ENCODE measurements at regions of chr3 and their contacts with region 1.

Region 1: DNA sequence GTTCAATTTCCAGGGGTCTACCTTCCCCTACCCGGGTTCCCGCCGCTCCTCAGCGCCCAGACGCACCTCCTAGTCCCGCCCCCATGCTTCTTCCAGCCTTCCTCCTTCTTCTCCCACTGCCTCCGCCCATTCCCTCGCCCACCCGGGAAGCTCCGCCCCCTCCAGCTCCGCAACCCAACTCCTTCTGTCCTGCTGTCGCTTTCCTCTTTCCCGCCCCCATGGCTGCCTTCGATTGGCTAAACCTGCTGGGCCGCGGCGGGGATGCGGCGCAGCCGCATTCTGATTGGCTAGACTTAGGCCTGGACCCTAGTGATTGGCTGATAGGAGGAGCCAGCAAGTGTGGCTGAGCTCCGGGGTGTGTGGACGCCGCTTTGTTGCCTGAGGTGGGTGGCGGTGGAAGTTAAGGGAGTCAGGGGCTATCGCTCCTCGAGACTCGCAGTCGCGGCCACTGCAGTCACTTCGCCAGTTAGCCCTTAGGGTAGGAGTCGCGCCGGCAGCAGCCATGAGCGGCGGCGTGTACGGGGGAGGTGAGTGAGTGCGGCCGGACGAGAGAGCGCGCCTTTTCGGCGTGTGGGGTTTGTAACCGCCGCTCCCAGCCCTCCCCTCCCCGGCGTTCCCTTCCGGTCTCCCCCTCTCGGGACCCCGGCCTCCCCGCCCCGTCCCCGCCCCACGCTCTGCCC is at the start of gene ACTL6A:
- DNase-seq: peak; percentile 100
- H3K4me3 ChIP-seq: peak within 1 kb of the TSS; percentile 55 to 75 (median 70)
- H3K27ac ChIP-seq: peak within 1 kb of the TSS; percentile 25
- H3K4me1 ChIP-seq: peaks cover 7% of the 10 kb centered on the region
- H3K27me3 ChIP-seq: no peaks in the 10 kb centered on the region
- CTCF ChIP-seq: no peak
- POLR2A ChIP-seq: peak; percentile 73
- total RNA-seq, gene ACTL6A: 63.1 and 68.3 TPM in 2 replicates

Region 2: DNA sequence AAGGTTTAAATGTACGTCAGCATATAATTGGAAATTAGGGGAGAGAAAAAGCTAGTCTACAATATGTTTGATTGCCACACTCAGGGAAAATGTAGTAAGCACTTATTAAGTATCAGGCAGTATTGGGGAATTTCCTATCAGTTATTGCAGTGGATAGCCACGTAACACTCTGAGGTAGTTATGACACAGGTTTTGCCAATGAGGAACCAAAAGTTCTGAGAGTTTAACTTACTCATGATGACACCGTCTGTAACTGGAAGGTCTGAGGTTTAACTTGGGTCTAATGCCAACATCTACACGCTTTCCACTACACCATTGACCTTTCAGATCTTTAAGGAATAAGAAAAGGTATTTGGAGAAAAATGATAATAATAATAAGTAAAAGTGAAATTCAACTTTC is 580.6 kb before region 1 on chr3:
- CTCF ChIA-PET with region 1: no interaction called
- POLR2A ChIA-PET with region 1: no interaction called
- dilution Hi-C with region 1: no loop called
- intact Hi-C with region 1: no loop called
- DNase-seq: no peak
- H3K4me3 ChIP-seq: no peak overlapping the region
- H3K27ac ChIP-seq: no peak overlapping the region
- H3K4me1 ChIP-seq: no peaks in the 10 kb centered on the region
- H3K27me3 ChIP-seq: no peaks in the 10 kb centered on the region
- CTCF ChIP-seq: no peak
- POLR2A ChIP-seq: no peak

Region 3: DNA sequence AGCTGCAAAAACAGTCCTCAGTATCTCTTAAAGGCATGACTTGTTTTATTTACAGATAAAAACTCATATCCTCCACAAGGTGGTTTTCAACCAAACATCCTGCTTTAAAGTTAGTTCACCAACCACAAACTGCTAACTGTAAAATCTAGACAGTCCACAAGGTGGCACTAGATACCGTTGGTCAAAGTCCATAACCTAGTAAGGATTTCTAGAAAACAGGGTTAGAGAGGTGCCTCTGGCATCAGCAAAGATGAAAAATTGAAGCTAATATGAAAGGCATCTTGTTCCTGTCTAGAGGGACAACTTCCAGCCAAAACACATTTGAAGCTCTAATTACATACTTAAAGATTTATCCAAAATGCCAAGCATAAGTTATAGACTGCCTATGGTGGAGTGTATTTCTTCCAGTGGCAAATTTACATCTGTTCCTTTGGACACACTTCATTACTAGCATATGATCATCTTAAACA is 547.1 kb before region 1 on chr3:
- CTCF ChIA-PET with region 1: no interaction called
- POLR2A ChIA-PET with region 1: no interaction called
- dilution Hi-C with region 1: no loop called
- intact Hi-C with region 1: loop called (anchors 2 kb)
- DNase-seq: peak; percentile 86
- H3K4me3 ChIP-seq: no peak overlapping the region
- H3K27ac ChIP-seq: no peak overlapping the region
- H3K4me1 ChIP-seq: peaks cover 6% of the 10 kb centered on the region
- H3K27me3 ChIP-seq: no peaks in the 10 kb centered on the region
- CTCF ChIP-seq: peak; percentile 59 to 62
- POLR2A ChIP-seq: no peak

Region 4: GRCh38 chr3:179322286-179323196 is 240.2 kb before region 1 on chr3 and contains the start of gene ZNF639:
- CTCF ChIA-PET with region 1: interaction called, 10 read pairs
- POLR2A ChIA-PET with region 1: no interaction called
- dilution Hi-C with region 1: no loop called
- intact Hi-C with region 1: loop called (anchors 1 kb)
- DNase-seq: peak; percentile 90
- H3K4me3 ChIP-seq: peak within 1 kb of the TSS; percentile 70 to 90 (median 87)
- H3K27ac ChIP-seq: peak within 1 kb of the TSS; percentile 74
- H3K4me1 ChIP-seq: peaks cover 19% of the 10 kb centered on the region
- H3K27me3 ChIP-seq: no peaks in the 10 kb centered on the region
- CTCF ChIP-seq: peak; percentile 83 to 88
- POLR2A ChIP-seq: peak; percentile 36
- total RNA-seq, gene ZNF639: 28.4 and 30.5 TPM in 2 replicates

Region 5: GRCh38 chr3:179421500-179421899 is 141.2 kb before region 1 on chr3:
- CTCF ChIA-PET with region 1: interaction called, 15 read pairs
- POLR2A ChIA-PET with region 1: no interaction called
- dilution Hi-C with region 1: no loop called
- intact Hi-C with region 1: loop called (anchors 1 kb)
- DNase-seq: peak; percentile 53
- H3K4me3 ChIP-seq: no peak overlapping the region
- H3K27ac ChIP-seq: no peak overlapping the region
- H3K4me1 ChIP-seq: no peaks in the 10 kb centered on the region
- H3K27me3 ChIP-seq: no peaks in the 10 kb centered on the region
- CTCF ChIP-seq: peak; percentile 27 to 36
- POLR2A ChIP-seq: no peak

Region 6: DNA sequence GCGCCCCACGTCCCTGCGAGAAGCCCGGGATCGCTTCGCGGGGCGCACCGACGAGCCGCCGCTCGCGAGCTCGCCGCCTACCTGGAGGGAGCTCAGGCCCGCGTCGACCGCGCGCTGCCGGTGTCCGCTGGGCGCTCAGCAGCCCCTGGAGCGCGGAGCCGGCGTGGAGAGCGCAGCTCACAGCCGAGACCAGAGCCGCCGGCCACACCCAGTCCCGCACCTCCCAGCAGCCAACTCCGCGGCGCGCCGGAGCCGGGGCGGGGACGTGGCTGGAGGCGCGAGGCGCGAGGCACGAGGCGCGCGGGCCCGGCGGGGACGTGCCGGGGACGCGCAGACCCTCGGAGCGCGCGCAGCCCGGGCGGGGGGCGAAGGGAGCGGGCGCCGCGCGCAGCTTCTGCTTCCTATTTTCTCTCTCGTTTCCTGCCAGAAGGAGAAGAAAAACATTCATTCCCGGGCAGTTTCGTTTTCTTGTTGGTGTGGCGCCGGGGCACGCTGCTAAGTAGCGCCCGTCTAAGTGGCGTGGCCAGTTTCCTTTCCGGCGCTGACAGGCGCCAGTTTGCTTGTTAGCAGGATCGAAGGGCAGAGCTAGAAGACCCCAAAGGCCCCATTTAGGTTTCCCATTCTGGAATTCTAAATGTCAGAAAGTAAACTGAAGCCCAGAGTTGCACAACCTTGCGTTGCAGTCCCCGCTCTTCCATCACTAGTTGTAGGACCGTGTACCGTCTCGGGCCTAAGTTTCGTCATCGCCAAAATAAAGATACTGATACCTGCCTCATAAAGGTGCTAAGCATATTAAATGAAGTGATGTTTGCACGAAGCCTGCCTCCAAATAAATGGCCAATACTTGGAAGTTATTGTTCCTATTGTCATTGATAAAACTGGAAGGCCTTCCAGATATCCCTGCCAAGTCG is 111.2 kb before region 1 on chr3 and contains the start of gene GNB4:
- CTCF ChIA-PET with region 1: interaction called, 57 read pairs
- POLR2A ChIA-PET with region 1: interaction called, 4 read pairs
- dilution Hi-C with region 1: no loop called
- intact Hi-C with region 1: loop called (anchors 1 kb)
- DNase-seq: peak; percentile 96
- H3K4me3 ChIP-seq: peak within 1 kb of the TSS; percentile 43 to 93 (median 92)
- H3K27ac ChIP-seq: peak within 1 kb of the TSS; percentile 95
- H3K4me1 ChIP-seq: peaks cover 29% of the 10 kb centered on the region
- H3K27me3 ChIP-seq: no peaks in the 10 kb centered on the region
- CTCF ChIP-seq: no peak
- POLR2A ChIP-seq: peak; percentile 87
- total RNA-seq, gene GNB4: 61.9 and 62.6 TPM in 2 replicates

Region 7: DNA sequence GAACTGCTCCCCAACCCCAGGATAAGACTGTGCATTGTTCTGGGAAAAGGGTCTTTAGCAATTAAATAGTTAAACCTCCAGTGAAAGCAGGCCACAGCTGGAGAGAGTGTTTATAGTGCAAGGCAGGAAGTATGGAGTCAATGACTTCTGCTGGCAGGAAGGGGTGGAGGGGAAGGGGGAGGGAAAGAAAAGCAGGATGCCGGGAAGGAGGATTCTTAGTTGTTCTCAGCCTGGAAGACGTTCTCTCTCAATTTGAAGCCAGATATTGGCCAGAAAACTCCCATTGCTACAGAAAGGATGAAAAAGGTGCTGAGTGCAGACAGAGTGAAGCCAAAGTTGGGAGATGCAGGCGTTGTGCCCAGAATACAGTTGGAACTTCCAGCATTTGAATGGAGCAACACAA is 35.7 kb before region 1 on chr3:
- CTCF ChIA-PET with region 1: no interaction called
- POLR2A ChIA-PET with region 1: no interaction called
- dilution Hi-C with region 1: no loop called
- intact Hi-C with region 1: loop called (anchors 1 kb)
- DNase-seq: peak; percentile 94
- H3K4me3 ChIP-seq: peak overlapping the region in 2 of 3 experiments; percentile 18 to 40
- H3K27ac ChIP-seq: peak overlapping the region; percentile 78
- H3K4me1 ChIP-seq: peaks cover 18% of the 10 kb centered on the region
- H3K27me3 ChIP-seq: no peaks in the 10 kb centered on the region
- CTCF ChIP-seq: no peak
- POLR2A ChIP-seq: peak; percentile 31

Region 8: DNA sequence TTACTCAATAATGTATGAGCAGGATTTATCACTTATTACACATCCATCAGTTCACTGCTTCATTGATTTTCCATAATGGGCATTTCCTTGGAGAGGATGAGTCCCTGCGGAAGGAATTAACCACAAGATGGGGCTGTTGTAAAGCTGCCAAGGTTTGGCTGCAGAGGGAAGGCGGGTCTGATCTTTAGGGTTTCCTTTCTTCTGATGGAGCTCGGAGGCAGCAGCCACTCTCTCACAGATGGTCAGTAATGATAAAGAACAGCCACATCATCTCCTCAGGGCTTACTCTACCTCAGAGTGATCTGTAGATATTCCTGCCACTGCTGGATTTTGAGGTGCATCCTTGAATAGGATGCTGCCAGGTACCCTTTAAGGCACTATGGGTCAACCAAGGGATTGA is 205.3 kb after region 1 on chr3:
- CTCF ChIA-PET with region 1: no interaction called
- POLR2A ChIA-PET with region 1: no interaction called
- dilution Hi-C with region 1: no loop called
- intact Hi-C with region 1: no loop called
- DNase-seq: peak; percentile 43
- H3K4me3 ChIP-seq: no peak overlapping the region
- H3K27ac ChIP-seq: no peak overlapping the region
- H3K4me1 ChIP-seq: peaks cover 16% of the 10 kb centered on the region
- H3K27me3 ChIP-seq: no peaks in the 10 kb centered on the region
- CTCF ChIP-seq: peak; percentile 37 to 38
- POLR2A ChIP-seq: no peak

Region 9: GRCh38 chr3:179872842-179873241 is 310.1 kb after region 1 on chr3:
- CTCF ChIA-PET with region 1: no interaction called
- POLR2A ChIA-PET with region 1: no interaction called
- dilution Hi-C with region 1: no loop called
- intact Hi-C with region 1: no loop called
- DNase-seq: no peak
- H3K4me3 ChIP-seq: no peak overlapping the region
- H3K27ac ChIP-seq: no peak overlapping the region
- H3K4me1 ChIP-seq: no peaks in the 10 kb centered on the region
- H3K27me3 ChIP-seq: no peaks in the 10 kb centered on the region
- CTCF ChIP-seq: no peak
- POLR2A ChIP-seq: no peak

Region 10: GRCh38 chr3:180278583-180279188 is 716.0 kb after region 1 on chr3:
- CTCF ChIA-PET with region 1: no interaction called
- POLR2A ChIA-PET with region 1: no interaction called
- dilution Hi-C with region 1: no loop called
- intact Hi-C with region 1: no loop called
- DNase-seq: no peak
- H3K4me3 ChIP-seq: no peak overlapping the region
- H3K27ac ChIP-seq: no peak overlapping the region
- H3K4me1 ChIP-seq: no peaks in the 10 kb centered on the region
- H3K27me3 ChIP-seq: no peaks in the 10 kb centered on the region
- CTCF ChIP-seq: no peak
- POLR2A ChIP-seq: no peak